Sciatic nerve (tissue), 2 donors: ENCODE measurements at regions of chr20 and their contacts with region 1.

Region 1: GRCh38 chr20:36773597-36774390 is at the start of gene DSN1:
- DNase-seq: peak; percentile 100
- ATAC-seq: peak; percentile 98
- total RNA-seq, gene DSN1: 7.2 TPM

Region 2: DNA sequence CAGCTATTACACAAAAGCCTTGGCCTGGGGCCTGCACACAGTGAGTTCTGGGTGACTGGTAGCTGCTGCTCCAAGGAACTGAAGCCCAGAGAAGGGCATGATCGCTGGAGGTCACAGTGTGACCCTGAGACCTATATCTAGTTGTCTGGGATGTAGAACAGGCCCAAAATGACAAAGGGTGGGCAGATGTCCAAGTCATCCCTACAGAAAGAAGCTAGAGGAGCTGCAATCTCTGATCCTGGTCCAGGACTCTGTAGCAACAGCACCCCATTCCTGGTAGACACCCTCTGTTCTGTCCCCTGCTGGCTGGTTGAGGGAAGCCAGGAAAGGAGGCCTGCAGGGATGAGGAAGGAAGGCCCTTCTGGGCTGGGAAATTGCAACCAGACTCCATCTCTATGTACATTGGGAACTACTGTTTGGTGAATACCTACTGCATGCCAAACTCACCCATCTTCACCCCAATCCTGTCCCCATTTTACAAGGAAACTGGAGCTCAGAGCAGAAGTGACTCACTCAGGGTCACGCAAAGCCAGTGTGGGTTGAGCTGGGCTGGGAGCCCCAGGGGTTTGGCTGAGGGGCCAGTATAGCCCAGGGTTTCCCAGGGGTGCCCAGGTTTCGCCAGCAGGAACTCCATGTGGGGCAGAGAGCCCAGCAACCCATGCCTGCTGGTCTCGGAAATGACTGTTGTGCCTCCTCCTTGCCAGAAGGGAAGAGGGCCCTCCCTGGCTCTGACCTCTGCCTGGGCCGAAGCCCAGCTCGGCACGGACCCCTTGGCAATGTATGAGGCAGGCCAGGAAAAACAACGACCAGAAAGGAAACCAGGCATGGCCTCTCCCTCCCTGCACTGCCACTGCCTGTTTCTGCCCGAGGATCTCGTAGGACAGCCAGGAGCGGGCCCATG is 57.2 kb after region 1 on chr20:
- intact Hi-C with region 1: no loop called
- DNase-seq: no peak
- ATAC-seq: peak; percentile 27

Region 3: DNA sequence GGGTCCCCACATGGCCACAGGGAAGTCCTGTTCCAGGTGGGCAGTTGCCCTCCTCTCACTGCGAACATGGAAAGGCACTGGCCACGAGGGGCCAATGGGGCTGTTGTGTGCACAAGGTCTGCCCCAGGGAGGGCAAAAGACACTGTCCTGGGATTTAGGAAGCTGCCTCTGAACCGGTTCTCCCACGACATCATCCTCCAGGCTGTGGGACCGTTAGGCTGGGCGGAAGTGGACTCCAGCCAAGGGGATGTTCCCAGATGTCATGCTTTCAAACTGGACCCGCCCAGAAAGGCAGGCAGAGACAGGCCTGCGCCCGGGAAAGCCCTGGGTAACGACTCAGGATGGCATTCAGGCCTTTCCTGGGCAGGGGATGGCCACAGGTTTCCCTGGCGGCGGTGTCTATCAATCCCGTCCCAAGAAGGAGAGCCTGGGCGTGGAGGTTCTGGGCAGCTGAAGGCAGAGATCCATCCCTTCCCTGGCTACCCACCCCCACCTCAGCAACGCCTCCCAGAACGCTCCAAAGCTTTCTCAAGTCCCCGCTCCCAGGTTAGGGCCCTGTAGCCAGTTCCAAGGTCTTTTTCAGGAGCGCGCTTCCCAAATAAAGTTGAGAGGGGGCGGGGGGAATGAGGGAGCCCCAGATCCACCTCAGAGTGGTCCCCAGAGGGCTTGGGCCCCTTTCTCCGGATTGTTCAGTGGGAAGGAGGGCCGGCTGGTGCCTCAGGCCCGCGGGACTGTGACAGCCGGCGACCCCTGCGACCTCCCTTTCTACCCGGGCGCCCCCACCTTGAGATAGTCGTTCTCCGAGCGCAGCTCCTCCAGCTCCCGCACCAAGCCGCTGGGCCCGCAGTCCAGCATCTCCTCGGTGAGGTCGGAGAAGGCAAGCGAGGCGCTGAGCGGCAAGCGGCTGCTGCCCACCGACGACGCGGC is 88.3 kb after region 1 on chr20:
- intact Hi-C with region 1: loop called (anchors 5 kb)
- DNase-seq: peak; percentile 90
- ATAC-seq: peak; percentile 88